ENCODE measurements at regions of chr7 and their contacts with region 1.

Region 1: DNA sequence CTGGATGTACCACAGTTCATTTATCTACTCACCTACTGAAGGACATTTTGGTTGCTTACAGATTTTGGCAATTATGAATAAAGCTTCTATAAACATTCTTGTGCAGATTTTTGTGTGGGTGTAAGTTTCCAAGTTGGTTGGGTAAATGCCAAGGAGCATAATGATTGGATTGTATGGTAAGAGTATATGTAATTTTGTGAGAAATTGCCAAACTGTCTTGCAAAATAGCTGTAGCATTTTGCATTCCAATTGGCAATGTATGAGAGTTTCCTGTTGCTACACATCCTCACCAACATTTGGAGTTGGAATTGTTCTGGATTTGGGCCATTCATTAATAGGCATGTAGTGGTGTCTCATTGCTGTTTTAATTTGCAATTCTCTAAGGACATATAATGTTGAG is 33.9 kb upstream of the HYAL4 start:
- DNase-seq: no peak
- ATAC-seq: no peak
- H3K4me3 ChIP-seq: no peak overlapping the region
- H3K27ac ChIP-seq: no peak overlapping the region
- H3K4me1 ChIP-seq: no peaks in the 10 kb centered on the region
- H3K27me3 ChIP-seq: no peaks in the 10 kb centered on the region
- CTCF ChIP-seq: no peak
- EP300 ChIP-seq: no peak
- POLR2A ChIP-seq: no peak
- RAD21 ChIP-seq: no peak

Region 2: DNA sequence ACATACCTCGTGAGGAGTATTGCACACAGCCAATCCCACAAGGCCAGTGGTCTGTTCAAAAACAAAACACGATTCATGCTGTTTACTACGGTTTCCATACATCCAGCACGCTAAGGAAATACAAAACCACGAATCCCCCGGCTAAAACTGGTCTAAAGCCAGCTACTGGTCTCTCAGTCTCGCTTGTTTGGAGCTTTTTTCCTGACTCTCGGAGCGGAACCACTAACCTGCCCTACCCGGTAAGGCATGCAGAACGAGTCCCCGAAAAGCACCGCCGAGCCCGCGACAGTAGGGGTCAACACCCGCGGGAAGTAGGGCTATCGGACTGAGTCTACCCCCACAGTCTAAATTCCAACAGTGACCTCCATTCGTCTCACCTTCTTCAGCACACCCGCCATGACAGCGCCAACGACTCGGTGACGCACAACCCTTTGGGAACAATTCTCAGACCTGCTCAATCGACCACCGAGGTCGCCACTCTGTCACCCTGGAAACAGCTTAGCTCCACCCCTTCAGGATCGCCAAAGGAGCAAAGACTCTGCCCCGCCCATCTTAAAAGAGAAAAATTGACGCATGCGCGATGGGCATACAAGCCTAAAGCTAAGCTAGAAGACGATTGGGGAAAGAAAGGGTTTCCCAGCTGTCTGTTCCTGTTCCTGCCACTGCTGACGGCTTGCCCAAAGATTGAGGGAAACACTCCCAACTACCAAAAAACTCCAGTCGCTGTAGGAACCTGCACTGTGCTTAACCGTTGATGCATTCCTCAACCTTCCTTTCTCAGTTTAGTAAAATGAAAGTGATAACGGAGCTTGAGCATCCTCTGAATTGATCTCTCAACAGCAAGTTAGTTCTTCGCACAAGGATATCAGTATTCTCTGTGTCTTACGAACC is 253.4 kb before region 1 on chr7 and contains the start of gene NDUFA5:
- CTCF ChIA-PET with region 1: no interaction called
- POLR2A ChIA-PET with region 1: no interaction called
- in situ Hi-C with region 1: no loop called
- intact Hi-C with region 1: no loop called
- DNase-seq: peak; percentile 97 to 100 (median 98)
- ATAC-seq: peak; percentile 91
- H3K4me3 ChIP-seq: peak within 1 kb of the TSS; percentile 63
- H3K27ac ChIP-seq: peak within 1 kb of the TSS; percentile 95
- H3K4me1 ChIP-seq: peaks cover 13 to 27% of the 10 kb centered on the region in 2 experiments
- H3K27me3 ChIP-seq: no peaks in the 10 kb centered on the region
- CTCF ChIP-seq: peak in 1 of 3 experiments; percentile 32; a peak in 2 of 6 replicates
- EP300 ChIP-seq: no peak
- POLR2A ChIP-seq: peak; percentile 96
- RAD21 ChIP-seq: no peak
- polyA plus RNA-seq, gene NDUFA5: 669 to 677 TPM

Region 3: GRCh38 chr7:124688991-124689390 is 877.9 kb after region 1 on chr7:
- CTCF ChIA-PET with region 1: no interaction called
- POLR2A ChIA-PET with region 1: no interaction called
- in situ Hi-C with region 1: no loop called
- intact Hi-C with region 1: loop called (anchors 10 kb)
- DNase-seq: no peak
- ATAC-seq: no peak
- H3K4me3 ChIP-seq: no peak overlapping the region
- H3K27ac ChIP-seq: no peak overlapping the region
- H3K4me1 ChIP-seq: no peaks in the 10 kb centered on the region
- H3K27me3 ChIP-seq: no peaks in the 10 kb centered on the region
- CTCF ChIP-seq: no peak
- EP300 ChIP-seq: no peak
- POLR2A ChIP-seq: no peak
- RAD21 ChIP-seq: no peak